Mammary epithelial cell (primary cell): ENCODE measurements at regions of chr7 and their contacts with region 1.

Region 1: GRCh38 chr7:74379938-74380337 is 73.8 kb upstream of the GTF2IRD1 start:
- DNase-seq: no peak
- H3K4me3 ChIP-seq: no peak overlapping the region
- H3K27ac ChIP-seq: no peak overlapping the region
- H3K4me1 ChIP-seq: no peaks in the 10 kb centered on the region
- H3K27me3 ChIP-seq: no peaks in the 10 kb centered on the region
- CTCF ChIP-seq: no peak

Region 2: DNA sequence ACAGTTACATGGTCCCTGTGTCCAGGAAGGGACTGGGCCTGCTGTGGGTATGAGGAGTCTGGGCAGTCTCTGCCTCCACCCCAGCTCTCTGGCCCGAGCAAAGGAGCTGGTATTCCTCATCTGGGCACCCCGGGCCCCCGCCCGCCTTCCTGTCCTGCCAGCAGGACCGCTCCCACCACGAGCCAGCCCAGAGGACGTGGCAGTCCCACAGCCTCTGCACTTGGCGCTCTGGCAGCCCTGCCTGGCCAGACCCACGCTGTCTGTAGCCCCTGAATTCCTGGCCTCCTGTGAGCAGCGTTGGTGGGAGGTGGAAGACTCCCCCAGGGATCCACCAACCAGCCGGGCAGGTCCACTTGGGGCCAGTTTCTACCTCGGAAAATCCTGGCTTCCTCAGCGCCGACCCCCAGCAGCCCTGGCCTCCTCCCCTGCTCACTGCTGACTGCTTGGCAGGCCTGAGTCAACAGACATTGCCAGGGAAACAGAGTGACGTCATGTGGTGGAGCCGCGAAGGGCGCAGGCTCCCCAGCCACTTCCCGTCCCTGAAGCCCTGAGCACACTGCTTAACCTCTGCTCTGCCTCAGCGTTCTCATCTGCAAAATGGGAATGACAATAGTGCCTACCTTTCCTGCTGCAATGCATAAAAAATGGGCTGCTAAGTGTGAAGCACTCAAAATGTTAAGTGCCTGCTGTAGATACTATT is 317.9 kb before region 1 on chr7:
- CTCF ChIA-PET with region 1: no interaction called
- dilution Hi-C with region 1: no loop called
- in situ Hi-C with region 1: loop called in 1 of 2 experiments (anchors 25 kb)
- intact Hi-C with region 1: no loop called
- DNase-seq: peak; percentile 84
- H3K4me3 ChIP-seq: no peak overlapping the region
- H3K27ac ChIP-seq: no peak overlapping the region
- H3K4me1 ChIP-seq: peaks cover 17% of the 10 kb centered on the region
- H3K27me3 ChIP-seq: no peaks in the 10 kb centered on the region
- CTCF ChIP-seq: no peak